Panc1 (cell line): ENCODE measurements at regions of chr2 and their contacts with region 1.

Region 1: DNA sequence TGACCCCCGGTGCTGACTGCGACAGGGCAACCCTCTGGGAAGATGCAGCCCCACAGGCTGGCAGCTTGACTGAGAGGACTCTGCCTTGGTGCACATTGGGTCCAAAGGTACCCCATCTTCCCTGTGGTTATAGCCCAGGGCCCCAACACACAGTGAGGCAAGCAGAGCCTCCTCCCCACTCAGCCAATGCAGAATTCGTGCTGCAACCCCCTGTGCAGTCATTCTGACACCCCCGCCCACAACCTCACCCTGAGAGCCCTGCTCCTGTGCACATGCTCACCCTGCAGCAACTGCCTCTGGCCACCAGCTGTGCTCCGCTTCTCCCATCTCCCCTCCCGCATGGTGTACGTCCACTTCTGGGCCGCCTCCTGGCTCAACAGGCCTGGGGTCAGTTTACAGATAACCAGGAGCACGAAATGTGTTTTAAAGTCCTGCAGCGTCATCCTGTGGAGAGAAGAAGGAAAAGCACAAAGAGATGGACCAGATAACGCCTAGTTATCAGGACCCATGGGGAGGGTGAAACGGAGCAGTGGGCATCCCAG is 24.4 kb downstream of the CAPN14 start:
- DNase-seq: no peak
- ATAC-seq: no peak
- H3K4me3 ChIP-seq: no peak overlapping the region
- H3K27ac ChIP-seq: no peak overlapping the region
- H3K4me1 ChIP-seq: no peaks in the 10 kb centered on the region
- H3K27me3 ChIP-seq: peaks cover 4% of the 10 kb centered on the region; the same call in 1 of the 2 replicates
- CTCF ChIP-seq: no peak

Region 2: GRCh38 chr2:31079665-31080064 is 113.3 kb before region 1 on chr2:
- CTCF ChIA-PET with region 1: no interaction called
- POLR2A ChIA-PET with region 1: no interaction called
- in situ Hi-C with region 1: no loop called
- intact Hi-C with region 1: no loop called
- DNase-seq: no peak
- ATAC-seq: no peak
- H3K4me3 ChIP-seq: no peak overlapping the region
- H3K27ac ChIP-seq: no peak overlapping the region
- H3K4me1 ChIP-seq: no peaks in the 10 kb centered on the region
- H3K27me3 ChIP-seq: peaks cover 2% of the 10 kb centered on the region; the same call in 1 of the 2 replicates
- CTCF ChIP-seq: peak; percentile 42

Region 3: GRCh38 chr2:31138037-31138962 is 54.6 kb before region 1 on chr2 and contains the start of gene GALNT14:
- CTCF ChIA-PET with region 1: no interaction called
- POLR2A ChIA-PET with region 1: no interaction called
- in situ Hi-C with region 1: no loop called
- intact Hi-C with region 1: no loop called
- DNase-seq: no peak
- ATAC-seq: peak; percentile 86
- H3K4me3 ChIP-seq: peak within 1 kb of the TSS; percentile 36 to 47
- H3K27ac ChIP-seq: no peak within 1 kb of the TSS
- H3K4me1 ChIP-seq: no peaks in the 10 kb centered on the region; the same call in 1 of the 2 replicates
- H3K27me3 ChIP-seq: peaks cover 37% of the 10 kb centered on the region
- CTCF ChIP-seq: peak; percentile 74
- total RNA-seq, gene GALNT14: 0.67 TPM

Region 4: DNA sequence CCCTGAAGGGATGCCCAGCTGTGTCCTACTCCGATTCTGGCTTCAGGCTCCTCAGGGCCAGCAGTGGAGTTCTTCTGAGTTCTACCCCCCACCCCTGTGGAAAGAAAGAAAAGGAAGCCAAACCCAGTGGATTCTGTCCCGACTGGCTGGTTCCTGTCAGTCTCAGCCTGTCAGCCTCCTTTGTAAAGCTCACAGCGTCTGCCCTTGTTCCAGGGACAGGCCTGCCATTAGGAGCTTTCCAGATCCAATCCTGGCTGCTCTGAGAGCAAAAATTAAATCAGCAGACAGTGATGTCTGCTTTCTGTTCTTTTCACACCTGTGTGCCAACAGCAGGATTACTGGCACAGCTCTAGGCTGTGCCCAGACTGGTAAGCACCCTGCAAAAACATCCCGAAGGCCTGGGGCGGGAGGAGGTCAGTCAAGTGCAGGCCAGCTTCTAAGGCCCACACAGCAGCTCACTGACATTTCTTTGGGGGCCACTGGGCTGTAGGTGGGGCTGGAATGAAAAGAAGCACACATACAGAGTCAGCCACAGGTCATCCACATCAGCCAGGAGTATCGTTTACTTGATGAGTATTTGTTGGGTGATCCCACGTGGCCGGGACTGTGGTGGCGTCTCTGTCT is 110.1 kb after region 1 on chr2:
- CTCF ChIA-PET with region 1: no interaction called
- POLR2A ChIA-PET with region 1: no interaction called
- in situ Hi-C with region 1: no loop called
- intact Hi-C with region 1: loop called (anchors 10 kb)
- DNase-seq: no peak
- ATAC-seq: no peak
- H3K4me3 ChIP-seq: no peak overlapping the region
- H3K27ac ChIP-seq: no peak overlapping the region
- H3K4me1 ChIP-seq: no peaks in the 10 kb centered on the region
- H3K27me3 ChIP-seq: no peaks in the 10 kb centered on the region
- CTCF ChIP-seq: no peak

Region 5: DNA sequence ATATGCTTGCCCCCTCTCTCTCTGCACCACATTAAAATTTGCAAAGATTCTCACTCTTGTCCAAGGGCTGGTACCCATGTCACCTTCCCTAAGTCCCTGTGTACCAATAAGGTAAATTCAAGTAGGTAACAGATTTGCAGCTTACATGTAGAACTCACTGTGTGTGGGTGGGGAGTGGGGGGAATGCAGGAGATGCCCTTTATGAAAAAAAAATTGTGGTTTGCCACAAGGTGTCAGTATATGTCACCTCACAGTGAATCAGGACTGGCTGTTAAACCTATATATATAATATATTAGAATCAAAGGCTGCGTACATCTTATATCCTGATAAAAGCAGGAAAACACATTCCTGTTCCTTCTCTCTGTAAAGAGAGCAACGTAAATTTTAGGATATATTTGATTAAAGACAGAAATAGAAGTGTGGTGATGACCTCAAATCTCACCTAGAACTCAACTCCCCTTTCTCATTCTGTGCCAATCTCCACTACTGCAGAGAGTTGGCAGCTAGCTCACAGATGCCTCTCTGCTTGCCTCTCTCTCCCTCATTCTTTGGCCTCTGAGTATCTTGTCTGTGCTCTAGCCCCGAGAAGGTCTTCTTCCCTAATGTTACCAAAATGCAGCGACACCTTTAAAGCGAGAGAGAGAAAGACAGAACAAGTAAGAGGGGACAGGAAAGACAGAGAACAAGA is 221.1 kb after region 1 on chr2:
- CTCF ChIA-PET with region 1: no interaction called
- POLR2A ChIA-PET with region 1: no interaction called
- in situ Hi-C with region 1: no loop called
- intact Hi-C with region 1: no loop called
- DNase-seq: no peak
- ATAC-seq: no peak
- H3K4me3 ChIP-seq: no peak overlapping the region
- H3K27ac ChIP-seq: no peak overlapping the region
- H3K4me1 ChIP-seq: no peaks in the 10 kb centered on the region
- H3K27me3 ChIP-seq: no peaks in the 10 kb centered on the region
- CTCF ChIP-seq: peak; percentile 64